ENCODE measurements at regions of chr12 and their contacts with region 1.

Region 1: GRCh38 chr12:751192-751998 is 984 bp upstream of the WNK1 start:
- DNase-seq: peak; percentile 96
- ATAC-seq: peak; percentile 57
- H3K4me3 Mint-ChIP-seq: no peak overlapping the region
- H3K27ac Mint-ChIP-seq: no peak overlapping the region
- H3K4me1 Mint-ChIP-seq: peaks cover 24% of the 10 kb centered on the region
- H3K27me3 Mint-ChIP-seq: no peaks in the 10 kb centered on the region

Region 2: DNA sequence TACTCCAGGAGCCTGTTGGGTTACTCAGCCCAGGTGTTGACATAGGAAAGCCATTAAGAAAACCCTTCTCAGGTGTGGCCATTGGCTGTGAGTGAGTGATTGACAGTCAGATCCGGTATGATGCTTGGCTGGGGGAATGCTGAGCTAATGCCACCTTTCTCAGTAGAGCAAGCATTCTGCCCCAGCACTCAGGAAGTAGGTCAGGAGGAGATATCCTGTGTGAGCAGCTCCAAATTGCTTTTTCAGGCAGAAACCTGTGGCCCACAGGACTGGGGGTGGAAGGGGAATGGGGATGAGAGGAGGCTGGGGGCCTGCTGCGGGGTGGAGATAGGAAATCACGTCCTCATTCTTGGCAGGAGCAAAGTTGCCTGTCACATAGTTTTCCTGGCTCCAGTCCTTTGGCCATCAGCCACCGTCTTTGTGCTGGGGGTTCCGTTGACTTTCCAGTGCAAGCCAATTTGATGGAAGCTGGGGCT is 143.8 kb before region 1 on chr12:
- CTCF ChIA-PET with region 1: interaction called, 55 read pairs
- POLR2A ChIA-PET with region 1: interaction called, 6 read pairs
- DNase-seq: peak; percentile 47
- ATAC-seq: no peak
- H3K4me3 Mint-ChIP-seq: no peak overlapping the region
- H3K27ac Mint-ChIP-seq: peak overlapping the region; percentile 77
- H3K4me1 Mint-ChIP-seq: peaks cover 47% of the 10 kb centered on the region
- H3K27me3 Mint-ChIP-seq: peaks cover 2% of the 10 kb centered on the region

Region 3: DNA sequence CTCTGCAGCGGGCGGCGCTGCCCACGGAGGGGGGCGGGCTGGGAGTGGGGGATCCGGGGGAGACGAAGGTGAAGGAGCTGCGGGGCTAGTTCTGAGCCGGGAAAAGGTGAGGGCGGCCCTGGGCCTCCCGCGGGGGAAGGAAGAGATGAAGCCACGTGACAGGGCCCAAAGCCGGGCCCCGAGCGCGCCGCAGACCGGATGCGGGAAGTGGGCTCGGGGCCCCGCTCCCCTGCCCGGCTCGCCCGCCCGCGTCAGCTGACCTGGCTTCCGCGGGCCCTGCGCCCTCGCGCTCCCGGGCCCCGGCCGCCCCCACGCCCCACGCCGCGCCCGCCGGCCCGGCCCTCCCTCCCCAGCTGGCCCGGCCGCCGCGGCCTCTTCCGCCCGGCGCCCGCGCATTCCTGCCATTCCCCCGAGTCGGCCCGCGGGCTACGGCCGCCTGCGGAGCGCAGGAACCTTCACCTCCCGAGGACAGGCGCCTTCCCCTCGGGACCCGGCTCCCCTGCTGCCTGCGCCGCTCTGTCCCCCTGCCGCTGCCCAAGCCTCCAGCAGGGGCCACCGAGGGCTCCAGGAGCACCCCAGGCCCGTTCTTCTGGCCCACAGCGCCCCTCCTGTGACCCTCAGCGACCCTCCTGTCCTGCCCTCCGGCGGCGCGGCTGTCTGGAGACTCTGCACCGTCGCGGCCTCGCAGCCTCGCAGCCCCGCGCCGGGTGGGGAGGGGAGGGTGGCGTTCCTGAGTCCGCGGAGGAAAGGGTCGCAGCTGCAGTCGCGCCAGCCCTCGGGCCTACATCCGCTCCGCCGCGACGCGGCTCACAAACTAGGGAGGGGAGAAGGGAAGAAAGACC is 108.5 kb before region 1 on chr12:
- CTCF ChIA-PET with region 1: interaction called, 40 read pairs
- POLR2A ChIA-PET with region 1: interaction called, 39 read pairs
- DNase-seq: peak; percentile 84
- ATAC-seq: peak; percentile 86
- H3K4me3 Mint-ChIP-seq: peak overlapping the region; percentile 83
- H3K27ac Mint-ChIP-seq: peak overlapping the region; percentile 94
- H3K4me1 Mint-ChIP-seq: peaks cover 60% of the 10 kb centered on the region
- H3K27me3 Mint-ChIP-seq: no peaks in the 10 kb centered on the region

Region 4: GRCh38 chr12:668090-668481 is 83.3 kb before region 1 on chr12:
- CTCF ChIA-PET with region 1: interaction called, 88 read pairs
- POLR2A ChIA-PET with region 1: interaction called, 37 read pairs
- DNase-seq: no peak
- ATAC-seq: no peak
- H3K4me3 Mint-ChIP-seq: no peak overlapping the region
- H3K27ac Mint-ChIP-seq: no peak overlapping the region
- H3K4me1 Mint-ChIP-seq: peaks cover 67% of the 10 kb centered on the region
- H3K27me3 Mint-ChIP-seq: no peaks in the 10 kb centered on the region

Region 5: GRCh38 chr12:712172-712863 is 39.1 kb before region 1 on chr12:
- CTCF ChIA-PET with region 1: interaction called, 12 read pairs
- POLR2A ChIA-PET with region 1: no interaction called
- DNase-seq: no peak
- ATAC-seq: no peak
- H3K4me3 Mint-ChIP-seq: no peak overlapping the region
- H3K27ac Mint-ChIP-seq: no peak overlapping the region
- H3K4me1 Mint-ChIP-seq: peaks cover 26% of the 10 kb centered on the region
- H3K27me3 Mint-ChIP-seq: no peaks in the 10 kb centered on the region

Region 6: DNA sequence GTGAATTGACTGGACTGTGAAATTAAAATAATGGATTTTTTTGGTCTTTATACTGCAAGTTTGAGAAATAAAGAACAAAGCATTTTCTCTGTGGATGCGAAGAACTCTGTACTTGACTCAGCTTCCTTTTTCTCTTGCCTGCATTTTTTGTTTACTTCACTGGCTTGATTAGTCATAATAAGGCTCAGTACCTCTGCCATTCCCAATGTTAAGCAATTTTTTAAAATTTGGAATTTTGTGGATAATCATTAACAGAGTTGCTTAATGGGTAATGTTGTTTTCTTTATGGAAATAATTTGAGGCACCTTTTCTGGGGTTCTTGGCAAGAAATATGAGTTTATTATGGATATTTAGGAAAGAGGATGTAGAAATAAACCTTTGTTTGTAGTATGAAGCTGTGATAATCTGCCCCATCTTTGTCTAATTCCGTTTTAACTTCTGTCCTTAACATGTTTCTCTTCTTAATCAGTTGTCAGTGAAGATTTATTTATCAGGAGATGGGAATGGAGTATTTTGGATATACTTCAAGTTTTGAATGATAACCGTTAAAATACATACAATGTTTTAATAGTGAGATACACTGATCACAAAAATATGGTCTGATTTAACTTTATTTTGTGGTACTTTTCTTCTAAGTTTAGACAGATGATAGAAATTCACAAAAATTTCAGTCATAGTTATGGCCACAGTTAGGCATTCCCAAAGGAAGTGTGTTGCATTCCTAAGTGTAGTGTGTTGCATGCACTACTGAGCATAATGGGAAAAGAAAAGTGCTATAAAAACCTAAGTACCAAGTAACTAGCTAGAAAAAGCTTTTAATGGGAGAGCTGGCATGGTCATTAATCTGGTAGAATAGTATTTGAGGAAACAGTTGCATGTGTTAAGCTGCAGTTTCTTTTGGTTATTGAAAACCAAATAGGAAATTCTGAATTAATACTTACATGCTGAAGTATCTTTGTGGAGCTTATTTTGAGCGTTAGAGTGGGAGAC is 28.6 kb after region 1 on chr12:
- CTCF ChIA-PET with region 1: interaction called, 12 read pairs
- POLR2A ChIA-PET with region 1: interaction called, 3 read pairs
- DNase-seq: no peak
- ATAC-seq: no peak
- H3K4me3 Mint-ChIP-seq: peak overlapping the region; percentile 50
- H3K27ac Mint-ChIP-seq: no peak overlapping the region
- H3K4me1 Mint-ChIP-seq: peaks cover 53% of the 10 kb centered on the region
- H3K27me3 Mint-ChIP-seq: no peaks in the 10 kb centered on the region

Region 7: DNA sequence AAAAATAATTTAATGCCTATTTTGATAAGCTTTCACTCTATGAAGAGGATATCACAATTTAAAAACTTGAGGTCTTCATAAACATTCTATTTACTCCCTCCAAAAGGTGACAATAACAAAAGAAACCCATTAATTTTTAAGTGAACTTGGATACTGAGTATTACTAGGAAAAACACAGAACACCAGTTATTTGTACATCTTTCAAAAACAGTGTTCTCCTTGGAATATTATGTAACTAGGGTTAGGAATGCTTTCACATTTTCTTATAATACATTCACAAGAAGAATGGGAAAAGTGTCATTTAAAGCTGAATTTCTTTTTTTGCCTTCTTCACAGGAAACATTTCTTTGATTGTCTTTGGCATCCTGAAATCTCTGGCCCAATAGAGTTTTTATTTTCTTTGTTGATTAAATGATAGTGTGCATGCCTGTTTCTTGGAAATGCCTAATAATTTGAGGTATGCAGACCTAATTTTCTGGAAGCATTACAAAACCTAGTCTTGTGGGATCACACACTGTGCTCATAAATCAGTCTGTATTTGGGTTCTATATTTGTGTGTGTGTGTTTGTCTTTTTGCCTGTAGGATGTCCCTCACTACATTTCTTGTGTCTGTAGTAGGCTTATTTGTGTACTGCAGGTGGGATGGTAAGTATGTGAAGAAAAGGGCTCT is 77.5 kb after region 1 on chr12:
- CTCF ChIA-PET with region 1: no interaction called
- POLR2A ChIA-PET with region 1: no interaction called
- DNase-seq: no peak
- ATAC-seq: no peak
- H3K4me3 Mint-ChIP-seq: no peak overlapping the region
- H3K27ac Mint-ChIP-seq: no peak overlapping the region
- H3K4me1 Mint-ChIP-seq: peaks cover 10% of the 10 kb centered on the region
- H3K27me3 Mint-ChIP-seq: no peaks in the 10 kb centered on the region

Region 8: GRCh38 chr12:949453-950191 is 198.2 kb after region 1 on chr12 and contains the start of gene RAD52:
- CTCF ChIA-PET with region 1: interaction called, 14 read pairs
- POLR2A ChIA-PET with region 1: no interaction called
- DNase-seq: peak; percentile 98
- ATAC-seq: peak; percentile 89
- H3K4me3 Mint-ChIP-seq: peak within 1 kb of the TSS; percentile 91
- H3K27ac Mint-ChIP-seq: peak within 1 kb of the TSS; percentile 81
- H3K4me1 Mint-ChIP-seq: peaks cover 39% of the 10 kb centered on the region
- H3K27me3 Mint-ChIP-seq: peaks cover 4% of the 10 kb centered on the region
- total RNA-seq, gene RAD52: 19.3 to 20.9 TPM